K562 (cell line): ENCODE measurements at regions of chr11 and their contacts with region 1.

Region 1: DNA sequence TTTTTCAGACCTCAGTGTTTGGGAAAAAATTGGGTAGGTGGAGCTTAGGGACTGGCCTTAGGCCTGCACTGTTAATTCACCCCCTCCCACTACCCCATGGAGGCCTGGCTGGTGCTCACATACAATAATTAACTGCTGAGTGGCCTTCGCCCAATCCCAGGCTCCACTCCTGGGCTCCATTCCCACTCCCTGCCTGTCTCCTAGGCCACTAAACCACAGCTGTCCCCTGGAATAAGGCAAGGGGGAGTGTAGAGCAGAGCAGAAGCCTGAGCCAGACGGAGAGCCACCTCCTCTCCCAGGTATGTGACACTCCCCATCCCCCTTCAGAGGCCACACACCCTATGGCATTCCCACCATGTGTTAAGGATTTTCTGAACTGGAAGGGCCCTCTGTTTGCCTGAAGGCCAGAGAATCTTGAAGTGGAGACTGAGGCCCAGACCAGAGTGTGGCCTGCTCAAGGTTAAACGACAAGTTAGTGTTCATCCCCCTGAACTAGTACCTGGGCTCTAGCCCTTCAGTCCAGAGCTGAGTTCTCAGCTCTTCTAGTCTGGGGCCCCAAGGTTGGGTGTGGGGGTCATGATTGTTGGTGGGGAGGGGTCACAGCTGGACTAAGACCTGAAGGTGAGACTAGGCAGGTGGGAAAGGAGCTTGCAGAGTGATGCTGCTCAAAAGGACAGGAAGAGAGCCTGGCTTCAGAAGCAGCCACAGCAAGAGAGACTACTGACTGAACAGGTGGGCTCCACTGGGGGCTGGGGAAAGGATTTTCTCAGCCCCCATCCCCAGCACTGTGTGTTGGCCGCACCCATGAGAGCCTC is 2.3 kb upstream of the FOLR1 start:
- DNase-seq: no peak
- ATAC-seq: no peak
- H3K4me3 ChIP-seq: no peak overlapping the region
- H3K27ac ChIP-seq: no peak overlapping the region
- H3K4me1 ChIP-seq: peaks cover 5 to 10% of the 10 kb centered on the region in 2 experiments
- H3K27me3 ChIP-seq: no peaks in the 10 kb centered on the region
- CTCF ChIP-seq: no peak
- EP300 ChIP-seq: no peak
- POLR2A ChIP-seq: no peak
- RAD21 ChIP-seq: no peak

Region 2: GRCh38 chr11:72030472-72031045 is 159.1 kb before region 1 on chr11:
- CTCF ChIA-PET with region 1: no interaction called
- POLR2A ChIA-PET with region 1: no interaction called
- in situ Hi-C with region 1: loop called (anchors 10 kb)
- intact Hi-C with region 1: no loop called
- DNase-seq: no peak
- ATAC-seq: no peak
- H3K4me3 ChIP-seq: no peak overlapping the region
- H3K27ac ChIP-seq: no peak overlapping the region
- H3K4me1 ChIP-seq: no peaks in the 10 kb centered on the region
- H3K27me3 ChIP-seq: no peaks in the 10 kb centered on the region
- CTCF ChIP-seq: no peak
- EP300 ChIP-seq: no peak
- POLR2A ChIP-seq: no peak
- RAD21 ChIP-seq: no peak

Region 3: GRCh38 chr11:72585762-72586311 is 396.2 kb after region 1 on chr11:
- CTCF ChIA-PET with region 1: no interaction called
- POLR2A ChIA-PET with region 1: no interaction called
- in situ Hi-C with region 1: no loop called
- intact Hi-C with region 1: no loop called
- DNase-seq: peak; percentile 80 to 85 (median 81)
- ATAC-seq: peak; percentile 90
- H3K4me3 ChIP-seq: no peak overlapping the region
- H3K27ac ChIP-seq: no peak overlapping the region
- H3K4me1 ChIP-seq: peaks cover 0 to 21% of the 10 kb centered on the region in 2 experiments; a peak in 2 of 5 replicates
- H3K27me3 ChIP-seq: peaks cover 11 to 67% of the 10 kb centered on the region in 2 experiments; a peak in 3 of 5 replicates
- CTCF ChIP-seq: peak; percentile 85 to 92 (median 86)
- EP300 ChIP-seq: no peak
- POLR2A ChIP-seq: no peak
- RAD21 ChIP-seq: peak; percentile 65 to 91